Astrocyte of the cerebellum (primary cell): ENCODE measurements at regions of chr9 and their contacts with region 1.

Region 1: DNA sequence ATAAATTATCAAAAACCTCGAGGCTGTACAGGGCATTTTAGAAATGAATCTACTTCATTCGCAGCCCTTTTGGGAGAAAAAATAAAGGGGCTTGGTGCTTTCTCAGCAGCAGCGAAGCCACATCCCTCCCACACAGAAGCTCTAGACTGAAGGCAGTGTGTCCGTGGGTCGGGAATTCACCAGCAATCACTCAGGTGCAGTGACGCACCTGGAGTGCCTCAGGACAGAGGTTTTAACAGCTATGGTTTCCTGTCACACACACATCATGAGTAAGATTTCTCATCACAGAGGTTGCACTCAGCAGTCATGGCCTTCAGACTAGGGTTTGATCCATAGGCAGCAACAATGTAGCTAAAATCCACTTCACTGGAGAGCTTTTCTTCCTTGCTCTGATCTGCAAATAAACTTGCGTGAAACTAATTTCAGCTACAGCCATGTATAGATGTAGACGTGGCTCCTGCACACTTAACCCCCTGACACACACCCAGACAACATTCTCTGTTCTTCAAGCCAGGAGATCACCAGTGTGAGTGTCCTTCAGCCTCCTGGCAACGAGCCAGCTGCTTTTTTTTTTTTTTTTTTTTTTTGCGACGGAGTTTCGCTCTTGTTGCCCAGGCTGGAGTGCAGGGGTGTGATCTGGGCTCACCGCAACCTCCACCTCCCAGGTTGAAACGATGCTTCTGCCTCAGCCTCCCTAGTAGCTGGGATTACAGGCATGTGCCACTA is 34.8 kb downstream of the DYNC2I2 start:
- DNase-seq: no peak
- H3K4me3 ChIP-seq: no peak overlapping the region
- CTCF ChIP-seq: no peak

Region 2: DNA sequence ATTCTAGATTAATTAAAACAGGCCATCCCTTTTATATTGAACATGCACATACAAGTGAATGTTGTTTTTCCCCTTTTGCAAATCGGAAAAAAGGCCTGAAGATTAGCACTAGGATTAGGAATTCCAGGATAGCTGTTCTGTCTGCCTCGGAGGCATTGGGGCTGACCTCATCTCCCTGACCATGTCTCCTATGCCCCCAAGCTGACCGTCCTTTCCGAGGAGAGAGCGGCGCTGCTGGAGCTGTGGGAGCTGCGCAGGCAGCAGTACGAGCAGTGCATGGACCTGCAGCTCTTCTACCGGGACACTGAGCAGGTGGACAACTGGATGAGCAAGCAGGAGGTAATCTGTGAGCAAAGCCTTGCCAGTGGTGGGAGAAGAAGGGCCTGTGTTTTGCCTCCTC is 41.2 kb before region 1 on chr9:
- in situ Hi-C with region 1: loop called (anchors 5 kb)
- DNase-seq: no peak
- H3K4me3 ChIP-seq: no peak overlapping the region
- CTCF ChIP-seq: no peak

Region 3: GRCh38 chr9:128940271-128940921 is 318.5 kb after region 1 on chr9:
- in situ Hi-C with region 1: no loop called
- DNase-seq: no peak
- H3K4me3 ChIP-seq: no peak overlapping the region
- CTCF ChIP-seq: no peak